GM12878 (cell line): ENCODE measurements at regions of chr4 and their contacts with region 1.

Region 1: GRCh38 chr4:48109413-48110263 is 24.4 kb downstream of the TXK start:
- DNase-seq: no peak
- ATAC-seq: peak; percentile 90
- H3K4me3 ChIP-seq: no peak overlapping the region
- H3K27ac ChIP-seq: no peak overlapping the region
- H3K4me1 ChIP-seq: no peaks in the 10 kb centered on the region
- H3K27me3 ChIP-seq: no peaks in the 10 kb centered on the region
- CTCF ChIP-seq: peak; percentile 57 to 64 (median 60)
- EP300 ChIP-seq: no peak
- POLR2A ChIP-seq: no peak
- RAD21 ChIP-seq: peak; percentile 74

Region 2: DNA sequence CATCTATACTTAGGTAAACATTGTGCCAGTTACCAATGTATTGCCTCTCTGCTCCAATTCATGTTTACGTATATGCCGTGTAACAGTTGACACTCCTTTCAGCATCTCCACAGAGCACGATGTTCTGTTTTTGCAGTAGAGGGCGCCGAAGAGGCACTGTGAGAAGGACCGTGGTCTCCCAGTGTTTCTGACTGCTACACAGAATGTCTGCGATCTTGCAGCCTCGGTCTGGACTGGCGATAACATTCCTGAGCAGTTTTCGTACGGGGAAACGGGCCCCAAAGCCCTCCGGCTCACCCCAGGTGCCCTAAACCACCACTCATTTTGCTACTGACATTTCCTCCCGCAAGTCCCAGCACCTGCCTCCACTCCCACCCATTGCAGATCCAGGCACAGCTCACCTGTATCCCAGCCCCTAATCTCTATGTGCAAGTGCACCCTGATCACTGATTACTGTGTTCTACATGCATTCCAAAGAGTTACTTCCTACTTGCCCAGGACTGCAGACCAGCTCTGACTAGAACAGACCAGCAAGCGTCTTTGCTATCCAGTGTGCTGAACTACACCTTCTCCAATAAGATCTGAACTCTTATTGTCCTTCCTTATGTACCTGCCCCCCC is 182.9 kb before region 1 on chr4:
- CTCF ChIA-PET with region 1: interaction called, 11 read pairs
- POLR2A ChIA-PET with region 1: no interaction called
- RAD21 ChIA-PET with region 1: interaction called, 3 read pairs
- SMC1A ChIA-PET with region 1: interaction called, 3 read pairs
- in situ Hi-C with region 1: no loop called
- intact Hi-C with region 1: no loop called
- DNase-seq: no peak
- ATAC-seq: peak; percentile 98
- H3K4me3 ChIP-seq: no peak overlapping the region
- H3K27ac ChIP-seq: no peak overlapping the region
- H3K4me1 ChIP-seq: peaks cover 3% of the 10 kb centered on the region; the same call in 1 of the 2 replicates
- H3K27me3 ChIP-seq: no peaks in the 10 kb centered on the region; a peak in 1 of 4 replicates
- CTCF ChIP-seq: peak; percentile 72 to 77 (median 73)
- EP300 ChIP-seq: no peak
- POLR2A ChIP-seq: no peak
- RAD21 ChIP-seq: peak; percentile 73

Region 3: DNA sequence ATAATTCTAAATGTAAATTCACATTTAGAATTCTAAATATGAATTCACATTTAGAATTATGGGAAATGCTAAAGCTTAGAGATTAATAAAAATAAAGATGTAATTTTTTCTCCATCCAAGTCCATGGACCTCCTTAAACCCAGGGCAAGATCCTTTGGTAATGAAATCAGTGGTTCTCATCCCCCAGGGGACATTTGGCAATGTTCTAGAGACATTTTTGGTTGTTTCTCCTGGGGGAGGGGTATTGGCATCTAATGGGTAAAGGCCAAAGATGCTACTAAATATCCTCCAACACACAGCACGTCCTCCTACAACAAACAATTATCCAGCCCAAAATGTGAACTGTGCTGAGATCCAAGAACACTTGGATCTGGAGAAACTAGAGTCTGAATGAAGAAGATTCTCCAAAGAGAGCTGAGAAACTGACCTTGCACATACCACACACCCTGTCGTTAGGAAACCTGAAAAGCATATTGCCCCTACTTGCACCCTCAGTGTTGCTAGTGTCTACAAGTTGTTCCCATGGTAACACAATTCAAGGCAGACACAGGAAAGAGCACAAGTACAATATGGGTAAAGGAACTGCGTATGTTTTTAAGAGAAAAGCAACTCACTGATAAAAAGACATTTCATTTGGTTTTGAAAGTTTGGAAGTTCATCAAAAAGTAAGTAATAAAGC is 51.2 kb before region 1 on chr4:
- CTCF ChIA-PET with region 1: no interaction called
- POLR2A ChIA-PET with region 1: no interaction called
- RAD21 ChIA-PET with region 1: no interaction called
- SMC1A ChIA-PET with region 1: no interaction called
- in situ Hi-C with region 1: no loop called
- intact Hi-C with region 1: no loop called
- DNase-seq: no peak
- ATAC-seq: no peak
- H3K4me3 ChIP-seq: no peak overlapping the region
- H3K27ac ChIP-seq: no peak overlapping the region
- H3K4me1 ChIP-seq: no peaks in the 10 kb centered on the region
- H3K27me3 ChIP-seq: no peaks in the 10 kb centered on the region
- CTCF ChIP-seq: no peak
- EP300 ChIP-seq: no peak
- POLR2A ChIP-seq: no peak
- RAD21 ChIP-seq: no peak

Region 4: DNA sequence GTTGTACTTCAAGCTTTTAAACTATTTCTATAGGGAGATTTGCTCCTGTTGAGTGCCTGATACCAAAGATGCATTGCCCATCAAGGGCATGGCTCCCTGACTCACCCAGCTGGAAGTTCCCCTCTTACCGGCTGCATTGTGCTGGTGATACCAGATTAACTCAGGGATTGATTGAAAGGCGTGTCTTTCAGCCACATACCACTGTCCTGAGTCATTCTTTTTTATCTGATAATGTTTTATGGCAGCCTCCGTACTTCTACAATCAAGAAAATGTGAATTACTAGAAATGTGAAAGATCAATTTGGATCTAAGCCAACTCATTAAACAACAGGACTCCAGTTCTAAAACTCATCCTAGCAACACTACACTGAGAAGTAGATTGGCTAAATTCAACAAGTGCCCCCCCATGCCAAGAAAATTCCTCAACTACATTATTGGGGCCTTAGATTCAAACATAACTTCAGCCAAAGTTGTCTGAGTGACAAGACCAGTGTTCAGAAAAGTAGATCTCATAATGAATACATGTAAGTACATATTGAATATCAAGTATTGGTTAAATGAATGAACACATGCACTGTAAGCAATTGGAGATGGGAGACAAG is 15.6 kb before region 1 on chr4:
- CTCF ChIA-PET with region 1: interaction called, 16 read pairs
- POLR2A ChIA-PET with region 1: no interaction called
- RAD21 ChIA-PET with region 1: no interaction called
- SMC1A ChIA-PET with region 1: interaction called, 7 read pairs
- in situ Hi-C with region 1: no loop called
- intact Hi-C with region 1: no loop called
- DNase-seq: no peak
- ATAC-seq: no peak
- H3K4me3 ChIP-seq: no peak overlapping the region
- H3K27ac ChIP-seq: no peak overlapping the region
- H3K4me1 ChIP-seq: no peaks in the 10 kb centered on the region
- H3K27me3 ChIP-seq: no peaks in the 10 kb centered on the region
- CTCF ChIP-seq: no peak
- EP300 ChIP-seq: no peak
- POLR2A ChIP-seq: no peak
- RAD21 ChIP-seq: no peak

Region 5: GRCh38 chr4:48360285-48361010 is 250.8 kb after region 1 on chr4:
- CTCF ChIA-PET with region 1: no interaction called
- POLR2A ChIA-PET with region 1: no interaction called
- RAD21 ChIA-PET with region 1: no interaction called
- SMC1A ChIA-PET with region 1: no interaction called
- in situ Hi-C with region 1: no loop called
- intact Hi-C with region 1: no loop called
- DNase-seq: no peak
- ATAC-seq: no peak
- H3K4me3 ChIP-seq: no peak overlapping the region
- H3K27ac ChIP-seq: no peak overlapping the region
- H3K4me1 ChIP-seq: no peaks in the 10 kb centered on the region
- H3K27me3 ChIP-seq: no peaks in the 10 kb centered on the region
- CTCF ChIP-seq: no peak
- EP300 ChIP-seq: no peak
- POLR2A ChIP-seq: no peak
- RAD21 ChIP-seq: no peak